Activated CD4-positive, alpha-beta memory T cell treated with anti-CD3 and anti-CD28 coated beads for 36 hours (primary cell): ENCODE measurements at regions of chr3 and their contacts with region 1.

Region 1: DNA sequence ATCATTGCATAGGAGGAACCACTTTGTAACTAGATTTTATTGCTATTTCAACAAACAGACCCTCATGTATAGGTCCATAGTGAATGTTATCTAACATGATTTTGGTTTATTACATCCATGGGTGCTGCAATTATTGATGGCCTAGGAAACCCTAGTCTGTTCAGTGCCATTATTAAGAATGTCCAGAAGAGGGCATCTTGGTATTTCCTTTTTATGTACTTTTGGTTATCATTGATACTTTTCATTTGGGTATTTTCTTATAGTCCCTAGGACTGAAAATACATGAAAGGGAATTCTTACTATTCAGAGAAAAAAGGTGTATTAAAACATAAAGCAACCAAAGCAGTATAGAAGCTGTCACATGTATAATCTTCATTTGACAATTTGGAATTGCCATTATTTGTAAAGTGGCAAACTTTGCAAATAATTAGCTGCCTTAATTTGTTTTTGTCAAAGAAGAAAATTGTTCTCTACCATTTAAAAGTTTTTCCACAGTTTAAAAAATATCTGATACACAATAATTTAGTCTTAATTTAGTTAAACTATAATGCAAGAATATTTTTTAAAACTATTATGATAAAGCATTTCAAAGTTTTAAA is 48.7 kb downstream of the CNOT10 start:
- DNase-seq: no peak
- H3K4me3 Mint-ChIP-seq: no peak overlapping the region
- H3K27ac Mint-ChIP-seq: no peak overlapping the region
- H3K4me1 Mint-ChIP-seq: no peaks in the 10 kb centered on the region
- H3K27me3 Mint-ChIP-seq: no peaks in the 10 kb centered on the region

Region 2: DNA sequence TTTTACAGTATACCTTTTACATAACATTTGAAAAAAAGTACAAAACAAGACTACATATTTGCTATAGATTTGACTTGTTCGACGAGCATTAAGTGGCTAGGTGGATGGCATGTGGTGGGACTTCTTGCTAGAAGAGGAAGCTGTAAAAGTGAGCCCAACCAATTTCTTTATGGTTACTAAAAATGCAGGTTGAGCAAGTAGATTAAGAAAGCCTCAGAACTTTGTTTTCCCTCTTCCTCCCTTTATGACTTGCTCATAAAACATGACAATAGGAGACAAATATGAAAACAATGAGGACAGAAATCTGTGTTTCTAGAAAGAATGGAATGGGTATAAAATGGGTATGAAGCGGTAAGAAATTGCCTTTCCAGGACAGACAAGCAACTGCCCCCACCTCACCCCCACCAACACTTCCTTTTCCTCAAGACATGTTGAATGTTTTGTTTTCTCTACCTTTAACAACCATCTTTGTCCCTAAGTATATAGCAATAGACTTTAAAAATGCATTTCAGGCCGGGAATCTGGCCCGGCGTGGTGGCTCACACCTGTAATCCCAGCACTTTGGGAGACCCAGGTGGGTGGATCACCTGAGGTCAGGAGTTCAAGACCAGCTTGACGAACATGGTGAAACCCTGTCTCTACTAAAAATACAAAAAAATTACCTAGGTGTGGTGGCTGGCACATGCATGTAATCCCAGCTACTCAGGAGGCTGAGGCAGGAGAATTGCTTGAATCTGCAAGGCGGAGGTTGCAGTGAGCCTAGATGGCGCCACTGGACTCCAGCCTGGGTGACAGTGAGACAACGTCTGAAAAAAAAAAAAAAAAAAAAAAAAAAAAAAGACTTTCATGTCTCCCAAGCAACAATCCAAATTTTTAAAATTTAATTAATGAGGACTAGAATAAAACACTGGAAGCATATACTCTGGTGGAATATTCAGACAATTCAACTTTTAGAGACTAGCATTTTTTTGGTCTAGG is 168.0 kb after region 1 on chr3:
- CTCF ChIA-PET with region 1: interaction called, 10 read pairs
- POLR2A ChIA-PET with region 1: no interaction called
- intact Hi-C with region 1: loop called (anchors 10 kb)
- DNase-seq: peak; percentile 64
- H3K4me3 Mint-ChIP-seq: no peak overlapping the region
- H3K27ac Mint-ChIP-seq: no peak overlapping the region
- H3K4me1 Mint-ChIP-seq: peaks cover 3% of the 10 kb centered on the region
- H3K27me3 Mint-ChIP-seq: peaks cover 19% of the 10 kb centered on the region

Region 3: GRCh38 chr3:32934150-32934742 is 200.5 kb after region 1 on chr3:
- CTCF ChIA-PET with region 1: interaction called, 10 read pairs
- POLR2A ChIA-PET with region 1: no interaction called
- intact Hi-C with region 1: loop called (anchors 1 kb)
- DNase-seq: peak; percentile 39
- H3K4me3 Mint-ChIP-seq: no peak overlapping the region
- H3K27ac Mint-ChIP-seq: no peak overlapping the region
- H3K4me1 Mint-ChIP-seq: no peaks in the 10 kb centered on the region
- H3K27me3 Mint-ChIP-seq: peaks cover 2% of the 10 kb centered on the region